Activated CD4-positive, alpha-beta memory T cell treated with anti-CD3 and anti-CD28 coated beads, Interleukin-2, amount 10 ng/mL, durations not matched to agents 7 days and 5 days (primary cell): ENCODE measurements at regions of chr5 and their contacts with region 1.

Region 1: GRCh38 chr5:39714036-39714698 is 289.4 kb upstream of the DAB2 start:
- DNase-seq: peak; percentile 23
- H3K4me3 Mint-ChIP-seq: no peak overlapping the region
- H3K27ac Mint-ChIP-seq: no peak overlapping the region
- H3K4me1 Mint-ChIP-seq: no peaks in the 10 kb centered on the region
- H3K27me3 Mint-ChIP-seq: peaks cover 5% of the 10 kb centered on the region

Region 2: GRCh38 chr5:39699161-39699560 is 15.0 kb before region 1 on chr5:
- CTCF ChIA-PET with region 1: interaction called, 10 read pairs
- POLR2A ChIA-PET with region 1: no interaction called
- DNase-seq: no peak
- H3K4me3 Mint-ChIP-seq: no peak overlapping the region
- H3K27ac Mint-ChIP-seq: no peak overlapping the region
- H3K4me1 Mint-ChIP-seq: no peaks in the 10 kb centered on the region
- H3K27me3 Mint-ChIP-seq: peaks cover 8% of the 10 kb centered on the region

Region 3: GRCh38 chr5:39730011-39730410 is 15.8 kb after region 1 on chr5:
- CTCF ChIA-PET with region 1: no interaction called
- POLR2A ChIA-PET with region 1: no interaction called
- DNase-seq: no peak
- H3K4me3 Mint-ChIP-seq: no peak overlapping the region
- H3K27ac Mint-ChIP-seq: no peak overlapping the region
- H3K4me1 Mint-ChIP-seq: no peaks in the 10 kb centered on the region
- H3K27me3 Mint-ChIP-seq: peaks cover 6% of the 10 kb centered on the region

Region 4: GRCh38 chr5:39740404-39740803 is 26.2 kb after region 1 on chr5:
- CTCF ChIA-PET with region 1: no interaction called
- POLR2A ChIA-PET with region 1: no interaction called
- DNase-seq: no peak
- H3K4me3 Mint-ChIP-seq: no peak overlapping the region
- H3K27ac Mint-ChIP-seq: no peak overlapping the region
- H3K4me1 Mint-ChIP-seq: no peaks in the 10 kb centered on the region
- H3K27me3 Mint-ChIP-seq: peaks cover 4% of the 10 kb centered on the region

Region 5: DNA sequence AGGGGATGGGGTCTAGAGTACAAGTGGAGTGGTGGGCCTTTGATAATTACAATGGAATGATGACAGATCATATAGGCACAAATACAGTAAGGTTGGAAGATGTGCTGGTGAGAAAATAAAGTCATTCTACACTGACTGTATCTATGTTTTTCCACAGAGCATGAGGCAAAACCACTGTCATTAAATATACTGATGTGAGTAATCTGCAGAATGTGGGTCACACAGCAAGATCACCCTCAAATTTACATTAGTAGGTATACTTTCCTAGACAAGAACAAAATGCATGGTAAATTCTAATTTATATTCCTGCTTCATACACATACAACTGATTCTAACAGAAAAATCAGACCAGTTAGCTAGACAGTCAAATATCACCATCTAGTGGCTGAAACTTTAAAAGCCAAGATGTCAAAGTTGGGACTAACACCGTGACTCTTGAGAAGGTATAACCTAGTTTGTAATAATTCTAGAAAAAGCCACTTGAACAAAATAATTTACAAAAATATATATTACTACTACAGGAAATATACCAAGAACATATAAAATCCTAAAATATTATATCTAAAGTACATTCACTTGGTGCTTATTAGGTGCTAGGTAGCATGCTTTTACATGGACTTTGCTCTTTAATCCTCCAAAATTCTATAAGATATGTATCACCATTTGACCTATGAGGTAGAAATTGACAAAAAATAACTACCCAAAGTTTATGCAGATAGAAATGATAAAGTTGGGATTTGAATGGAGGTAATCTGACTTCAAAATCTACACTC is 1022.1 kb after region 1 on chr5:
- CTCF ChIA-PET with region 1: interaction called, 10 read pairs
- POLR2A ChIA-PET with region 1: no interaction called
- DNase-seq: no peak
- H3K4me3 Mint-ChIP-seq: no peak overlapping the region
- H3K27ac Mint-ChIP-seq: no peak overlapping the region
- H3K4me1 Mint-ChIP-seq: peaks cover 23% of the 10 kb centered on the region
- H3K27me3 Mint-ChIP-seq: no peaks in the 10 kb centered on the region